Aorta (tissue), 5 donors: ENCODE measurements at regions of chr9 and their contacts with region 1.

Region 1: DNA sequence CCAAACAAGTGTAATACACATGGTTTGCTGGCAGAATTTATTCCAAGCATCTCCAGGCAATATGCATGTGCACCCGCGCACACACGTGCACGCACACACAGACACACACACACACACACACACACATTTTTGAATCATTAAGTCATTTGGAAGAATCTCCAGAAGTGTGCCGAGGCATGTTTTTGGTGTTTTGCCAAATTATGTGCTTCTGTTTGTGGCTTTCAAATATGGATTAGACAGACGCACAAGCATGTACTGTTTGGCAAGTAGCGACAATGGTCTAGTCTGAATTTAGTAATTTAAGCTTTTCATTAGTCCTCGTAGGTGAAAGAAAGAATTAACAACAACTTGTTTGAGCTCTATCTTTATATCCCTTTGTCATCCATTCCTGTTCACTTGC is 36.7 kb downstream of the NFIB start:
- DNase-seq: no peak
- ATAC-seq: no peak
- H3K4me3 ChIP-seq: no peak overlapping the region
- H3K27ac ChIP-seq: no peak overlapping the region
- H3K4me1 ChIP-seq: peaks cover 2 to 26% of the 10 kb centered on the region in 2 donors
- H3K27me3 ChIP-seq: no peaks in the 10 kb centered on the region

Region 2: GRCh38 chr9:14245901-14246525 is 31.2 kb before region 1 on chr9:
- intact Hi-C with region 1: loop called in 1 of 2 experiments (anchors 2 kb)
- DNase-seq: no peak
- ATAC-seq: no peak
- H3K4me3 ChIP-seq: no peak overlapping the region
- H3K27ac ChIP-seq: no peak overlapping the region
- H3K4me1 ChIP-seq: peaks cover 3 to 8% of the 10 kb centered on the region in 2 donors
- H3K27me3 ChIP-seq: no peaks in the 10 kb centered on the region

Region 3: GRCh38 chr9:14256588-14256987 is 20.7 kb before region 1 on chr9:
- intact Hi-C with region 1: loop called in 1 of 2 experiments (anchors 2 kb)
- DNase-seq: no peak
- ATAC-seq: peak; percentile 75
- H3K4me3 ChIP-seq: no peak overlapping the region
- H3K27ac ChIP-seq: peak overlapping the region in 1 of 2 donors; percentile 47
- H3K4me1 ChIP-seq: peaks cover 15 to 17% of the 10 kb centered on the region in 2 donors
- H3K27me3 ChIP-seq: no peaks in the 10 kb centered on the region

Region 4: GRCh38 chr9:14326264-14326826 is 49.1 kb after region 1 on chr9:
- intact Hi-C with region 1: no loop called
- DNase-seq: no peak
- ATAC-seq: no peak
- H3K4me3 ChIP-seq: no peak overlapping the region
- H3K27ac ChIP-seq: peak overlapping the region in 1 of 2 donors; percentile 63
- H3K4me1 ChIP-seq: no peaks in the 10 kb centered on the region
- H3K27me3 ChIP-seq: no peaks in the 10 kb centered on the region

Region 5: DNA sequence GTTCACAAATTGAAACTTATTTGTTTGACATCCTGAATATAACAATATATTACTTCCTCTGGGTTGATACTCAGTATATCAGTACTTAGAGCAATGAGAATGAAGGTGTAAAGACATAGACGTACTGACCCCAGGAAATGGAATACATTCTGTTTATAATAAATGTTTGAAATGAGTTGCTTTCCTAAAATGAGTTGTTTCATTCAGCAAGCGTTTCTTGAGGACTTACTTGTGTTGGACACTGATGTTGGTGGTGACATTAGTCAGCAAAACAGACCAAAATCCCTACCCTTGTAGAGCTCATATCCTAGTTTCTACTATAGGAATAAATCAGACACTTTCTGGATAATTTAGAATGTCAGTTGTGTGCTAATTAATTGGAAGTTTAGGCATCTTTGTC is 231.6 kb after region 1 on chr9:
- intact Hi-C with region 1: no loop called
- DNase-seq: no peak
- ATAC-seq: no peak
- H3K4me3 ChIP-seq: no peak overlapping the region
- H3K27ac ChIP-seq: no peak overlapping the region
- H3K4me1 ChIP-seq: no peaks in the 10 kb centered on the region
- H3K27me3 ChIP-seq: no peaks in the 10 kb centered on the region

Region 6: DNA sequence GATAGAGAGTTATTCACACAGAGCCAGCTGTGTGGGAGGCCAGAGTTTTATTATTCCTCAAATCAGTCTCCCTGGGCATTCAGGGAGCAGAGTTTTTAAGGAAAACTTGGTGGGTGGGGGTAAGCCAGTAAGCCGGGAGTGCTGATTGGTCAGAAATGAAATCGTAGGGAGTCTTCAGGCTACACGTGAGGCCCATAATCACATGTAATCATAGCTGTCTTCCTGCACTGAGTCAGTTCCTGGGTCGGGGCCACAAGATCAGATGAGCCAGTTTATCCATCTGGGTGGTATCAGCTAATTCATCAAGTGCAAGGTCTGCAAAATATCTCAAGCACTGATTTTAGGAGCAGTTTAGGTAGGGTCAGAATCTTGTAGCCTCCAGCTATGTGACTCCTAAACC is 1040.6 kb after region 1 on chr9:
- intact Hi-C with region 1: no loop called
- DNase-seq: no peak
- ATAC-seq: no peak
- H3K4me3 ChIP-seq: no peak overlapping the region
- H3K27ac ChIP-seq: no peak overlapping the region
- H3K4me1 ChIP-seq: no peaks in the 10 kb centered on the region
- H3K27me3 ChIP-seq: no peaks in the 10 kb centered on the region